ENCODE measurements at regions of chr19 and their contacts with region 1.

Region 1: GRCh38 chr19:12840091-12841079 is 2.1 kb downstream of the MAST1 start:
- DNase-seq: peak; percentile 25
- H3K4me3 ChIP-seq: peak overlapping the region; percentile 43
- H3K27ac ChIP-seq: no peak overlapping the region
- H3K4me1 ChIP-seq: peaks cover 24% of the 10 kb centered on the region
- H3K27me3 ChIP-seq: peaks cover 98% of the 10 kb centered on the region
- CTCF ChIP-seq: no peak

Region 2: DNA sequence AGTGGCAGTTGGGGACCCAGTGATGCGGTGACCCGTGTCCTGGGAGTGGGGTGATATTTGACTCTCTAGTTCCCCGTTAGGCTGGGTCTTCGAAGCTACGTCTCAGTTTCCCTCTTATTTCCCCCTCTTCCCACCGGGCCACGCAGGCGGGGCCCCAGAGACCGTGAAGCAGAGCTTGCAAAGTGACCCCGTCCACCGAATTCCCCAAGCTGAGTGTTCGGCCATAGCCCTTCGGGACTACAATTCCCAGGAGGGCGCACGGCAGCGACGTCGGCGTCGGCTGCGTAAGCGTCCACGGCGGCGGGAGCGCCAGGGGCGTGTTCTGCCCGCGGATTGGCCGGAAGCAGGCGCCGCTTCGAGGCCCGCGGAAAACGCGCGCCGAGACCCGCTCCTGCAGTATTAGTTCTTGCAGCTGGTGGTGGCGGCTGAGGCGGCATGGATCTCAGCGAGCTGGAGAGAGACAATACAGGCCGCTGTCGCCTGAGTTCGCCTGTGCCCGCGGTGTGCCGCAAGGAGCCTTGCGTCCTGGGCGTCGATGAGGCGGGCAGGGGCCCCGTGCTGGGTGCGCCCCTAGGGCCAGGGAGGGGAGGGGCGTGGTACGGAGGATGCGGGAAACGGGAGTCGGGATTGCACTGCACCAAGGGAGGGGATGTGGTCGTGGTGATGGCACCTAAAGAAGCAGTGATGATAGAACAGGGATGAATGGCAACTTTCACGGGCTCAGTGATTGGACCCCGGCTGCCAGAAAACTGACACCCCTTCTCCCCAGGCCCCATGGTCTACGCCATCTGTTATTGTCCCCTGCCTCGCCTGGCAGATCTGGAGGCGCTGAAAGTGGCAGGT is 33.9 kb before region 1 on chr19 and contains the start of gene RNASEH2A:
- intact Hi-C with region 1: loop called (anchors 5 kb)
- DNase-seq: peak; percentile 91
- H3K4me3 ChIP-seq: peak within 1 kb of the TSS; percentile 78
- H3K27ac ChIP-seq: peak within 1 kb of the TSS; percentile 74
- H3K4me1 ChIP-seq: peaks cover 27% of the 10 kb centered on the region
- H3K27me3 ChIP-seq: no peaks in the 10 kb centered on the region
- CTCF ChIP-seq: peak; percentile 35
- total RNA-seq, gene RNASEH2A: 2.5 TPM

Region 3: DNA sequence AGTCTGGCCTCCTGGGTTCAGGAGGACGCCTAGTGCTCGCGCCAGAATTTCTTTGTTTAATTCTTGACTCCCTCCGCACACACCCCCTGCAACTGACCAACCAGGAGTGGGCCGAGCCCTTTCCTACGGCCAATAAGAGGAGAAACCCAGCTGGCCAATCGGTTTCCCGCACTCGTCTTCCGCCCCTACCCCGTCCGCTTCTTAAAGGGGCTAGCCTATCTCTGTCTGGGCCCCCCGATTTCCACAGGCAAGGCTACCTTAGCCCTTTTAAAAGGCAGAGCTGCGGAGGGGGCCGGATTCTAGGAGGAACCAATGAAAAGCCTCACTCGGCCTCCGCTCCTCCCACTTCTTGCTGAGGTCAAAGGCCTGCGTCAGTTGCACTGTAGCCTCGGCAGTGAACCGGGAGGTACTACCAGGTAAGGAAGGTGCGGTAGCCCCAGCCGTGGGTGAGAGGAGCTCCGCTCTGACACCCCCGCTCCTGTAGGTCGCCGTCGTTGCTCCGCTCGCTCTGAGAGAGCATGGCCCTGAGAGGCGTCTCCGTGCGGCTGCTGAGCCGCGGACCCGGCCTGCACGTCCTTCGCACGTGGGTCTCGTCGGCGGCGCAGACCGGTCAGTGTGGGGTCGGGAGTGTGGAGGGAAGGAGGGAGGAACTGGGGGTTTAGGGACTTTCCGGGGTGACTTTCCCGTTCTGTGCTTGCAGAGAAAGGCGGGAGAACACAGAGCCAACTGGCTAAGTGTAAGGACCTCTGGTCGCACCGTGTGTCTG is 50.6 kb after region 1 on chr19 and contains the start of gene GCDH:
- intact Hi-C with region 1: no loop called
- DNase-seq: peak; percentile 96
- H3K4me3 ChIP-seq: peak within 1 kb of the TSS; percentile 99
- H3K27ac ChIP-seq: peak within 1 kb of the TSS; percentile 87
- H3K4me1 ChIP-seq: peaks cover 19% of the 10 kb centered on the region
- H3K27me3 ChIP-seq: peaks cover 17% of the 10 kb centered on the region
- CTCF ChIP-seq: no peak
- total RNA-seq, gene GCDH: 41.8 TPM